Activated T-helper 1 cell treated with anti-CD3 and anti-CD28 coated beads, Interleukin-12 subunit alpha, Interleukin-12 subunit beta, Interleukin-2, Interleukin-4 antibody, amounts not matched to agents 30 ng/mL and 10 ng/mL and 1 ng/mL, durations not matched to agents 14 hours and 24 hours and 36 hours (primary cell): ENCODE measurements at regions of chr19 and their contacts with region 1.

Region 1: DNA sequence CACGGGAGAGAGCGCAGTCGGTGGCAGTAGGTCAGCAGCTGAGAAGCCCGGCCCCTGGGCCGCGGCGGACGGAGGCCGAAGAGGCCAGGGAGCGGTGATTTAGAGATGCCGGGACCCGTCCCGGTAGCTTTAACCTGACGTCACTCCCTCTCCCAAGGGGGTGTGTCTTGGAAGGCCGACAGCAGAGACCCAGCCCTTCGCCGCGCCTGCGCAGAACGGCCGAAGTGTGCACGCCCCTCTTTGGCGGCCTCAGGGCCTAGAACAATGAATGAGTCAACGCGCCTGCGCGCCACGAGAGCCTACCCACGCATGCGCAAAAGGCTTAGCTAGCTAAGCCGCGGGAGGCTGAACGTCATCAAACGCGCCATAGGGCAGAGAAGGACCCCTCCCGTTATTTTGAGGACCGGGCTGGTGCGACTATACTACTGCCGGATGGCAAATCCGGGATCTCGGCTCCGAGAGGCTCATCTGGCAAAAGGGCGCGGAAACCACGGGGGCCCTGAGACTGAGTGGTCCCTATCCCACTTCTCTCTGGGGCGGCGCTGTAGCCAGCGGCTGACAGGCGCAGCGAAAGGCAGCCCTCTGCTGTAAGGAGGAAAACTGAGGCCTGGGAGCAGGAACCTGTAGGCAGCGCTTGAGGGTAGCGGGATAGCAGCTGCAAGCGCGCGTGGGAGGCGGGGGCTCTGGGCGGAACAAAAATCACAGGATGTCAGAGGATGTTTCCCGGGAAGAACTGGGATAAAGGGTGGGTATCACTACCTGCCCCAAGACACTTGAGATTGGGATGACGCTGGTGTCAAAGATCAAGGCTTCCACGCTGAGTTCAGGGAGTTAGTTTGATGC is at the starts of genes IRGQ and ZNF576:
- DNase-seq: peak; percentile 100
- H3K4me3 Mint-ChIP-seq: peak within 1 kb of the TSS; percentile 97
- H3K27ac Mint-ChIP-seq: peak within 1 kb of the TSS; percentile 97
- H3K4me1 Mint-ChIP-seq: peaks cover 39% of the 10 kb centered on the region
- H3K27me3 Mint-ChIP-seq: no peaks in the 10 kb centered on the region
- total RNA-seq, gene IRGQ: 33.5 and 34.9 TPM in 2 replicates
- total RNA-seq, gene ZNF576: 17.3 and 18.6 TPM in 2 replicates

Region 2: GRCh38 chr19:43407416-43408005 is 188.7 kb before region 1 on chr19:
- intact Hi-C with region 1: no loop called
- DNase-seq: no peak
- H3K4me3 Mint-ChIP-seq: no peak overlapping the region
- H3K27ac Mint-ChIP-seq: no peak overlapping the region
- H3K4me1 Mint-ChIP-seq: no peaks in the 10 kb centered on the region
- H3K27me3 Mint-ChIP-seq: peaks cover 1% of the 10 kb centered on the region

Region 3: DNA sequence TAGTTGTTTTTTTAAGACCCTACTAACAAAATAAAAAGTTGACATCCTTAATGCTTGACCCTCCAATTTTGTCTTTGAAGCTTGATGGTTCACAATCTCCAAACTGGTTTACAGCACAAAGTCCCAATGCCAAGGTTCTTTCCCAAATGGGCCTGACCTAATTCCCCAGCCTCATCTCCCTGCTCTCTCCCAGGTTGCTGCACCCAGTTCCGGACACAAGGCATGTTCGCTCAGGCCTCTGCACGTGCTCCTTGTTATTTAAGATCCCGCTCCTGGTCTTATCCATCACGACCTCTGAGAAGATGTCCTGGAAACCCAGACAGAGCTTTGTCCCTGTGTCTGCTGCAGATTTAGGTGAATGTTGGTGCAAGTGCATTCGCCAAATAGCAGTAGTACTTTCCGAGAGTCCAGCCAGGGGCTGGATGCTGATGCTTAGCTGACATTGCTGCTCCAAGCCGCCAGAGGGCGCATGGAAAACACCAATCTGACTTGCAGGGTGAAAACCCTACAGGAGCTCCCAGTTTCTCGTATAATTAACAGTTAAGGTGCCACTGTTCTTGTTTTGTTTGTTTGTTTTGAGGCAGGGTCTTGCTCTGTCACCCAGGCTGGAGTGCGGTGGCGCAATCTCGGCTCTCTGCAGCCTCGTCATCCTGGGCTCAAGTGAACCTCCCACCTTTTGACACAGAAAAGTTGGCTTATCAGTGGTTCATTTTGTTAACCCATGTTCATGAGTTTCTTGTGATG is 149.3 kb before region 1 on chr19:
- intact Hi-C with region 1: loop called (anchors 2 kb)
- DNase-seq: peak; percentile 68
- H3K4me3 Mint-ChIP-seq: no peak overlapping the region
- H3K27ac Mint-ChIP-seq: no peak overlapping the region
- H3K4me1 Mint-ChIP-seq: peaks cover 29% of the 10 kb centered on the region
- H3K27me3 Mint-ChIP-seq: no peaks in the 10 kb centered on the region

Region 4: DNA sequence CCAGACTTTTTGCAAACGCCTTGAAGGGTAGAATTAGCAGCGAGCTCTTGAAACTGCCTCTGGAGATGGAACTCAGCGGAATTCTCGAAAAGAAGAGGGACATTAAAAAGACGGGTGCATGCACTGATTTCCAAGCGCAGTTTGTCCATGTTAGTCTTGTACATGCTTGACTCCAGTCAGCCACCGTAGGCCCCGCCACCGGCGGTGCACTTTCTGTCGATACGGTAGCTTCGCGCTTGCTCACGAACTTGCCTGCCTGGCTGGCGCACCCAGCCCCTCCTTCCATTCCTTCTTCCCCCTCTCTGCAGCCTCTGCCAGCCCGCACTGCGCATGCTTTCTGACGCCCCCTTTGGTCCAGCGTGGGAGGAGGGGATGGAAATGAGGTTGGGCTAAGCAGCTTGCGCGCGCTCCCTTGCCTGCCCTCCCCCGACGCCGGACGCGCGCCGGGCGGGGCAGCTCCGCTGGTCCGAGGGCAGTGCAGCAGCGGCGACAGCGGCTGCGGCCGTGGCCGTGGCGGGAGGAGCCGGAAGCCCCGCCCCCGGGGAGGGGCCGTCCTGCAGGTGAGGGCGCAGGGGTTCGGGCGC is 63.2 kb before region 1 on chr19 and contains the start of gene ZNF575:
- intact Hi-C with region 1: loop called (anchors 1 kb)
- DNase-seq: peak; percentile 81
- H3K4me3 Mint-ChIP-seq: peak within 1 kb of the TSS; percentile 96
- H3K27ac Mint-ChIP-seq: peak within 1 kb of the TSS; percentile 99
- H3K4me1 Mint-ChIP-seq: peaks cover 23% of the 10 kb centered on the region
- H3K27me3 Mint-ChIP-seq: no peaks in the 10 kb centered on the region
- total RNA-seq, gene ZNF575: 1.4 and 2.6 TPM in 2 replicates

Region 5: DNA sequence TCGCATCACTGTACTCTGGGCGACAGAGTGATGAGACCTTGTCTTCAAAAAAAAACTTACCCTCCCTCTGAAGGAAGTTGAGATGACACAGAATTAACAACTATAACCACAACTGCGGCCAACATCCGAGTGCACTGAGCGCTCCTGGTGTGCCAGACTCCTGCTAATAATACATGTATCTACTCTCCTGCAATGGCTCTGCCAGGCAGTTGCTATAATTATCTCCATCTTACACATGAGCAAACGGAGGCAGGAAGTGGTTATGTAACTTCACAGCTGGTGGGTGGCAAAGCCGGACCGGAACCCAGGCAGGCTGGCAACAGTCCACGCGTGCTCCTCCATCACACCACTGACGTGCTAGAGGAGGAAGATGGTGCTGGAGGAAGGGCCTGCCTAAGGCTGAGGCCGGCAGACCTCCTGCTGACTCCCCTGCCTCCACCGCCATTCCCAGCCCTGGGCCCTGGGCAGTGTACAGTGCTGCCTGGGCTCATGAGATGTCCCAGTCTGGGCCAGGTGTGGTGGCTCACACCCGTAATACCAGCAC is 33.5 kb before region 1 on chr19:
- intact Hi-C with region 1: loop called (anchors 1 kb)
- DNase-seq: peak; percentile 54
- H3K4me3 Mint-ChIP-seq: peak overlapping the region; percentile 37
- H3K27ac Mint-ChIP-seq: peak overlapping the region; percentile 74
- H3K4me1 Mint-ChIP-seq: peaks cover 32% of the 10 kb centered on the region
- H3K27me3 Mint-ChIP-seq: no peaks in the 10 kb centered on the region

Region 6: DNA sequence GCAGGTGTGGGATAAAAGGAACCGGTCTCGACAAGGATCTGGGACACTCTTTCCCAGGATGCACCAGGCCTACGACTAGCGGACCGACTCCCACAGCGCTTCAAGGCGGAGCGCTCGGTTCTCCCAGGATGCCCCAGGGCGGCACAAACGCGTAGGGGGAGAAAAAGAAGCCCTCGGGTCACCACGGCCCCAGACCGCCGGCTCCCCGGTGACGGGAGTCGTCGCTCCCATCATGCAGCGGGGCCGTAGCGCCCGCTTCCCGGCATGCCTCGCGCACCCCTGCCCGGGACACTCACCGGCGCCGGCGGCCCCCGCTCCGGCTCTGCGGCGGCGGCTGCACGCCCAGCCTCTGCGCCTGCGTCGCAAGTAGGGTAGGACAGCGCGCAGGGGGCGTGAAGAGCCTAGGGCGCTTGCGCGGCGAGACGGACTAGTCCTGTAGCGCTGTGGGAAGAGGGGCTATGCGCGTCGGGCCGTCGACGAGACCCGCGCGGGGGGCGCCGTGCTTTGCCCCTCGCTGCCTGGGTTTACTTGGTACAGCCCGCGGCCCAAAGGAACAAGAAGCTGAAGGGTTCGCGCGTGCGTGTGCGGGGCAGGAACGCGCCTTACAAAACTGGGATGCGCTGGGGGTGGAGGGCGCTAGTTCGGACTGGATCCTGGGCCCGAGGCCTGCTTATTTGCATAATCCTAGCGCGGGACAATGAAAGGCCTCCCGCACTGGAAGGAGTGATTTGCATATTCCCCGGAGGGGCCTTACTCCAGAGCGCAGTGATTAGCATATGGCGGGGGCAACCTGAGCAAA is 23.2 kb after region 1 on chr19 and contains the start of gene ZNF428:
- intact Hi-C with region 1: loop called (anchors 1 kb)
- DNase-seq: peak; percentile 86
- H3K4me3 Mint-ChIP-seq: peak within 1 kb of the TSS; percentile 98
- H3K27ac Mint-ChIP-seq: peak within 1 kb of the TSS; percentile 99
- H3K4me1 Mint-ChIP-seq: peaks cover 23% of the 10 kb centered on the region
- H3K27me3 Mint-ChIP-seq: no peaks in the 10 kb centered on the region
- total RNA-seq, gene ZNF428: 17.9 and 20.3 TPM in 2 replicates